Activated T-helper 1 cell treated with anti-CD3 and anti-CD28 coated beads, Interleukin-12 subunit alpha, Interleukin-12 subunit beta, Interleukin-2, Interleukin-4 antibody, amounts not matched to agents 30 ng/mL and 10 ng/mL and 1 ng/mL, durations not matched to agents 14 hours and 24 hours and 36 hours (primary cell): ENCODE measurements at regions of chr7 and their contacts with region 1.

Region 1: DNA sequence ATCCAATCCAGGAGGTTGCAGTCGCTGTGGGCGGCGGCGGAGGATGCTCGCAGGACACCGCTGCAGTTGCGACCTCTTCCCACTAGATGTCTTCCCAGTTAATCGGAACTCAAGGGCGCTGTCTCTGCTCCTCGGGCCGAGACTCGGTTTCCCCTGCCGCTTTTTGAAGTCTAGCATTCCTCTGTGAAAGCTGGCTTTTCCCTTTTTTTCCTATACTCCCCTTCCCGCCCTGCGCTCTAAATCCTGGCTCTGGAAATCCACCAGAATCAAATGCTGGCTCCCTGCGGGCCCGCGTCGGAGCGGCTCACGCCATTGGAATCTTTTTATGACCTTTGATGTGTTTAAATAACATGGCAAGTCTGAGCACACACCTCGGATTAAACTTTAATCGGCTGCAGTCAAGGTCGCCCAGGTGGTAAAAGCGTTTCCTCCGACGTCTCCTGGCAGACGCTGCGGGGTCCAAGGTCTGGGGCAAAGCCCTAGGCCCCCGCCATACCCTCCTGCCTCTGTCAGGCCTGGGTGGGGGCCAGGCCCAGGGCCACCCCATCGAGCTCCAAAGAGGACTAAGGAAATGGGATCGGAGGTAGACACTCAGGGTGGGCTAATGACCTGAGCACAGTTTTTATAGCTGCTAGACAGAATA is 10.7 kb upstream of the HOXA13 start:
- DNase-seq: no peak
- H3K4me3 Mint-ChIP-seq: peak overlapping the region; percentile 4
- H3K27ac Mint-ChIP-seq: no peak overlapping the region
- H3K4me1 Mint-ChIP-seq: no peaks in the 10 kb centered on the region
- H3K27me3 Mint-ChIP-seq: peaks cover 91% of the 10 kb centered on the region

Region 2: DNA sequence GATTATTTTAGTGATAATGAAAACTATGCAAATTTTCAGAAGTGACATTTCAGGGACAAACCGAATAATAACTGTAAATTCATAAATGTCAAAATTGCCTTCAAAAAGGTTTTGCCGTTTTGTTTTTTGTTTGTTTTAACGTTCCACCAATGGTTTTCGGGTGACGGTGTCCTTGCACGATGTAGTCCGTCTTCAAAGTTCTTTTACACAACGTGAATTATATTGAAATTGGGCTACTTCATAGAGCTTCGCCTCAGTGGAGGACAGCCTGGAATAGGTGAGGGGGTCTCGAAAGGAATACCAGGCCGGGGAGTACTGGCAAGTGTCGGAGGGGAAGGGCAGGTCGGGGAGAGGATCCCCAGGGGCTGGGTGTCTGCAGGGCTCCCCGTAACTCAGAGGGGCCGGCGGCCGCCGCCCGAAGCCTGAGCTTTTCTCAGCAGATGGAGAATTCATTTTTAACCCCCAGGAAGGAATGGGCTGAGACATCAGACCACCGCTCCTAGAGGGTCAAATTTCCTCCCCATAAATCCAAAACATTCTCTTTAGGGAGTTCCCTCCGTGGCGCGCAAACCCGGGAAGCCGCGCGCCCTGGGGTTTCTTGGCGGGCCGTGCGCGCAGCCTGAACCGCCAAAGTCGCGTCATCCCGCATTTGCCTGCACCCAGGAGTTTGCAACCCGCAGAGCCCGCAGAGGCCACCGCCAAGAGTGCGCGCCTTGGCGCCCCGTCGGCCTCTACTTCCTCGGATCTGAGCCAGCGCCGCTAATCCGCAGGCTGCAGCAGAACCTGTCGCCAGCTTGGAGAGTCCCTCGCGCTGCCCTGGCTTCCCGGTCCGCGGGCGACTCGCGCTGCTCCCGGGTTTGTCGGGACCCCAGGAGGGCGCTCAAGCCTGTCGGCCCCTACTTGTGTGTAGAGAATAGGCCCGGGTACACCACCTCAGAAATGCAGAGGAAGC is 14.7 kb after region 1 on chr7:
- intact Hi-C with region 1: loop called (anchors 1 kb)
- DNase-seq: no peak
- H3K4me3 Mint-ChIP-seq: no peak overlapping the region
- H3K27ac Mint-ChIP-seq: no peak overlapping the region
- H3K4me1 Mint-ChIP-seq: peaks cover 4% of the 10 kb centered on the region
- H3K27me3 Mint-ChIP-seq: peaks cover 75% of the 10 kb centered on the region

Region 3: DNA sequence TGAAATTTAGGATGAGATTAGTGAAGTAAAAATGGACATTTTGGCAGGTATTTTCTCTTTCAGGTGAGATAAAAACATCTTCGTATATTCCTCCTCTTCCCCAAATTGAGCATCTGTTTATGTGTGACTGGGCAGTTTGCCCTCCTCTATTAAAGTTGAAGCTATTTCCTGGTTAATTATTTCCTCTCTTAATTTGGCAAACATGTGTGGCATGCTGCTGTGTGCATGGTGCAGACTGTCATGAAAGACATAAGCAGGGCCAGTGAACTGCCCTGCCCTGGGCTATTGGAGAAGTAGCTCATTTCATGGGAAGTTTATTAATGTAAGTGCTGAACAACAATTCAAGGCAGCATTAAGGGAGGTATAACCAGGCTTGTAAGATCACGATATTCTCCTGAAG is 84.7 kb after region 1 on chr7:
- intact Hi-C with region 1: no loop called
- DNase-seq: no peak
- H3K4me3 Mint-ChIP-seq: no peak overlapping the region
- H3K27ac Mint-ChIP-seq: no peak overlapping the region
- H3K4me1 Mint-ChIP-seq: no peaks in the 10 kb centered on the region
- H3K27me3 Mint-ChIP-seq: peaks cover 2% of the 10 kb centered on the region

Region 4: GRCh38 chr7:27576360-27576944 is 365.9 kb after region 1 on chr7:
- intact Hi-C with region 1: loop called (anchors 5 kb)
- DNase-seq: no peak
- H3K4me3 Mint-ChIP-seq: no peak overlapping the region
- H3K27ac Mint-ChIP-seq: no peak overlapping the region
- H3K4me1 Mint-ChIP-seq: no peaks in the 10 kb centered on the region
- H3K27me3 Mint-ChIP-seq: peaks cover 5% of the 10 kb centered on the region

Region 5: GRCh38 chr7:28020302-28020940 is 809.9 kb after region 1 on chr7:
- intact Hi-C with region 1: loop called (anchors 1 kb)
- DNase-seq: peak; percentile 26
- H3K4me3 Mint-ChIP-seq: no peak overlapping the region
- H3K27ac Mint-ChIP-seq: no peak overlapping the region
- H3K4me1 Mint-ChIP-seq: peaks cover 7% of the 10 kb centered on the region
- H3K27me3 Mint-ChIP-seq: peaks cover 7% of the 10 kb centered on the region